Activated T-helper 1 cell treated with anti-CD3 and anti-CD28 coated beads, Interleukin-12 subunit alpha, Interleukin-12 subunit beta, Interleukin-2, Interleukin-4 antibody, amounts not matched to agents 30 ng/mL and 10 ng/mL and 1 ng/mL, durations not matched to agents 14 hours and 24 hours and 36 hours (primary cell): ENCODE measurements at regions of chr1 and their contacts with region 1.

Region 1: DNA sequence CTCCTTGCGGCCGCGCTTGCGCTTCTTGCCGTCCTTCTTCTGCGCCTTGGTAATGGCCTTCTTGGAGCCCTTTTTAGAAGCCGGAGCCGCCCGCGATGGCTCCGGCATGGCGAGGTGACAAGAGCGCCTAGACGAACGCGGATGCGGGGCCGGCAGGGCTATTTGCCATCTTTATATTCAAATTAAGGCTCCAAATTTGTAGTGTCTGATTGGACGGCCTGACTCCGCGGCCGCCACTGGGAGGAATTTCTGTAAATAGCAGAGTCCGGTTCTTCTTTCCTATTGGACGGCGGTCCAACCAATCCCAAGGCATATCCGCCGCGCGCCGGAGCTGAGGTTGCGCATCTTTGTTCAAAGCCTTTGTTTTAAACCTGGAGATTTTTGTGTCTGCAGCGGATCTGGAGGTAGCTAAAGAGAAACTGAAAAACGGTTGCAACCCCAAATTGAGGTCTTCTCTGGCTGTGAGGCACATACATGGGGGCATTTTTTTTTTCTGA is 22.6 kb upstream of the RNF187 start:
- DNase-seq: peak; percentile 88
- H3K4me3 Mint-ChIP-seq: peak overlapping the region; percentile 85
- H3K27ac Mint-ChIP-seq: peak overlapping the region; percentile 88
- H3K4me1 Mint-ChIP-seq: peaks cover 61% of the 10 kb centered on the region
- H3K27me3 Mint-ChIP-seq: peaks cover 11% of the 10 kb centered on the region

Region 2: GRCh38 chr1:228416217-228416933 is 48.2 kb before region 1 on chr1 and contains the start of gene TRIM17:
- intact Hi-C with region 1: loop called (anchors 2 kb)
- DNase-seq: peak; percentile 38
- H3K4me3 Mint-ChIP-seq: peak within 1 kb of the TSS; percentile 77
- H3K27ac Mint-ChIP-seq: peak within 1 kb of the TSS; percentile 61
- H3K4me1 Mint-ChIP-seq: peaks cover 20% of the 10 kb centered on the region
- H3K27me3 Mint-ChIP-seq: peaks cover 7% of the 10 kb centered on the region
- total RNA-seq, gene TRIM17: 1.4 and 1.7 TPM in 2 replicates

Region 3: DNA sequence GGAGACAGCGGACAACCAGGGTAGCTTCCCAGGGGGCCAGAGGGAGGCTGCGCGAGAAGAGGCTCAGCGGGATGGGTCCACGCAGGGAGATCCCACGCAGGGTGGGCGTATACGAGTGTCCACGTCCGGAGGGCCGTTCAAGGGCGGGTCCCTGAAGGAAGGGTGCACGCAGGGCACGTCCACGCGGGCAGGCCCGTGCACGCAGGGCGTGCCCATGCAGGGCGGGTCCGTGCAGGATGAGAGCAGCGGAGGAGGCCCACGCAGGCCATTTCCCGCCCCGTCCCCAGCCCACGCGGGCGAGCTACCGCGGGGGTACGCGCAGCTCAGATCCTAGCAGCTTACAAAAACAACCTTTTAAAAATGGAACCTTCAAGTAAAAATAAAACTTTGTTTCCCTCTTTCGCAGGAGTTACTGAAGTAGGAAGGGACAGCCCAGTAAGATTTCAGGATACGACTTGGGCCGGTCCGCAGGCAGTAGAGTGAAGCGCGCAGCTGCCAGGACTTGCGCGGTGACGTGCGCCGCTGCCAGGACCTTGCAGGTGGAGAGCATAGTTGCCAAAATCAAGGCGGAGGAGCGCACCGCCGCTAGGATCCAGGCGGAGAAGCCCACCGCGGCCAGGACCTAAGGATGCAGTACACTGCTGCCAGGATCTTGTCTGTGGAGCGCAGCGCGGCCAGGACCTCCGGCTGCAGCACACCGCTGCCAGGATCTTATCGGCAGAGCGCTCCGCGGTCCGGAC is 22.2 kb after region 1 on chr1:
- intact Hi-C with region 1: loop called (anchors 1 kb)
- DNase-seq: peak; percentile 84
- H3K4me3 Mint-ChIP-seq: peak overlapping the region; percentile 97
- H3K27ac Mint-ChIP-seq: peak overlapping the region; percentile 99
- H3K4me1 Mint-ChIP-seq: peaks cover 29% of the 10 kb centered on the region
- H3K27me3 Mint-ChIP-seq: peaks cover 7% of the 10 kb centered on the region

Region 4: DNA sequence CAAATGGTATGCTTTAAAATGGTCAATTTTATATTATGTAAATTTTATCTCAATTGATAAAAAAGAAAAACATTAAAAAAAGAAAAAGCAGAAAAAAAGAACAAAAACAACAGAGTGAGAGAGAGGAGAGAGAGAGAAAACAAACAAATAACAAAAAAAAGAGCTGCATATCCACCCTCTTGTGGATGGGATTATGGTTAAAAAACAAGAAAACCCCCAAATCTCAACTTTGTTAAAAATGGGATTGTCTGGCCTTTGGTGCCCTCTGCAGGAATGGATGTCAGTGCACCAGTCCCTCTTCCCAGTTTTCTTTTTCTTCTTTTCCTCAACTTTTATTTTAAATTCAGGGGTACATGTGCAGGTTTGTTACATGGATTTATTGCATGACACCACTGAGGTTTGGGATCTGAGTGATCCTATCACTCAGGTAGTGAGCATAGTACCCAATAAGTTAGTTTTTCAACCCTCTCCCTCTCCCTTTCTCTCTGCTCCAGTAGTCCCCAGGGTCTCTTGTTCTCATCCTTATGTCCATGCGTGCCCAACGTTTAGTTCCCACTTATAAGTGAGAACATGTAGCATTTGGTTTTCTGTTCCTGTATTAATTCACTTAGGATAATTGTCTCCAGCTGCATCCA is 50.8 kb after region 1 on chr1:
- intact Hi-C with region 1: loop called (anchors 2 kb)
- DNase-seq: no peak
- H3K4me3 Mint-ChIP-seq: no peak overlapping the region
- H3K27ac Mint-ChIP-seq: no peak overlapping the region
- H3K4me1 Mint-ChIP-seq: peaks cover 6% of the 10 kb centered on the region
- H3K27me3 Mint-ChIP-seq: peaks cover 19% of the 10 kb centered on the region

Region 5: DNA sequence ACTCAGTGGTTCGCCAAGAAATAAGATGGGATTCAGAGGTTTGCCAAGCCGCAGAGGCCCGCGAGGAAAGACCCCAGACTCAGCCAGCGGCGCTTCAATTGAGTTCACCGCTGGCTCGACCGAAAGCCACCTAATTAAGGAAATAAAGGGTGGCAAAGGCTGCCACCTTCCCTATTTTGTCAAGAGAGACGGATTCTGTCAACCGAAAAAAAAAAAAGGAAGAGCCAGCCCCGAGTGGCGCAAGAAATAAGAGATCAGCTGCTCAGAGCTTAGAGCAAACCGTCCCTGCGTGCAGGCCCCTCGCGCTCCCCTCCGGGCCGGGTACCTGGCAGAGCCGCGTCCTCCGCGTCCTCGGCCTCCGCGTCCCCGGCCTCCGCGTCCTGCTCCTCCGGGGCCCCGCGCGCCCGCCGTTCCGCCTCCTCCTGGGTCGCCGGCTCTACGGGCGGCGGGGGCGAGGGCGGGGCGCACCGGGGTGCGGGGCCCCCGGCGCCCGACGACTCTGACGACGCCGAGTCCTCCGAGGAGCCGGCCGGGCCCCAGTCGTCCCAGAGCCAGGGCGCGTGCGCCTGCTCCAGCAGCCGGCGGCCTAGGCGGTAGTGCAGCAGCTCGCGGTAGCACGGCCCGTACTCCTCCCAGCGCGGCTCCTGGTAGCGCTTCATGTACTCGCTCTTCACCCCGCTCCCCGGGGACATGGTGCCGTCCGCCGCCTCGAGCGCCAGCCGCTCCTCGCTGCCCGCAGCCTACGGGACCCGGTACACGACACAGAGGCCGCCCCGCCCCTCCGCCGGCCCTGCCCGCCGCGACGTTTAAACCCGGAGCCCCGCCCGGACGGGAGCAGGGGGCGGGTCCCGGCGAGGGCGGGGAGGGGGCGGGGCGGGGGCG is 877.5 kb after region 1 on chr1:
- intact Hi-C with region 1: loop called (anchors 10 kb)
- DNase-seq: peak; percentile 82
- H3K4me3 Mint-ChIP-seq: peak overlapping the region; percentile 89
- H3K27ac Mint-ChIP-seq: peak overlapping the region; percentile 87
- H3K4me1 Mint-ChIP-seq: peaks cover 50% of the 10 kb centered on the region
- H3K27me3 Mint-ChIP-seq: peaks cover 21% of the 10 kb centered on the region